ENCODE measurements at regions of chr17 and their contacts with region 1.

Region 1: GRCh38 chr17:3865176-3865575 is 19.1 kb upstream of the NCBP3 start:
- DNase-seq: peak in 2 of 5 donors; percentile 44 to 48
- ATAC-seq: peak in 2 of 4 donors; percentile 62 to 65
- H3K4me3 ChIP-seq: no peak overlapping the region
- H3K27ac ChIP-seq: no peak overlapping the region
- H3K4me1 ChIP-seq: peaks cover 0 to 9% (median 0%) of the 10 kb centered on the region in 12 donors
- H3K27me3 ChIP-seq: no peaks in the 10 kb centered on the region
- CTCF ChIP-seq: no peak
- POLR2A ChIP-seq: no peak

Region 2: GRCh38 chr17:3732210-3732621 is 133.0 kb before region 1 on chr17:
- intact Hi-C with region 1: no loop called
- DNase-seq: peak in 1 of 5 donors; percentile 35
- ATAC-seq: peak in 2 of 4 donors; percentile 29 to 60
- H3K4me3 ChIP-seq: no peak overlapping the region
- H3K27ac ChIP-seq: no peak overlapping the region
- H3K4me1 ChIP-seq: peaks cover 0 to 5% (median 0%) of the 10 kb centered on the region in 12 donors
- H3K27me3 ChIP-seq: peaks cover 0 to 8% (median 0%) of the 10 kb centered on the region in 9 donors
- CTCF ChIP-seq: no peak
- POLR2A ChIP-seq: no peak

Region 3: DNA sequence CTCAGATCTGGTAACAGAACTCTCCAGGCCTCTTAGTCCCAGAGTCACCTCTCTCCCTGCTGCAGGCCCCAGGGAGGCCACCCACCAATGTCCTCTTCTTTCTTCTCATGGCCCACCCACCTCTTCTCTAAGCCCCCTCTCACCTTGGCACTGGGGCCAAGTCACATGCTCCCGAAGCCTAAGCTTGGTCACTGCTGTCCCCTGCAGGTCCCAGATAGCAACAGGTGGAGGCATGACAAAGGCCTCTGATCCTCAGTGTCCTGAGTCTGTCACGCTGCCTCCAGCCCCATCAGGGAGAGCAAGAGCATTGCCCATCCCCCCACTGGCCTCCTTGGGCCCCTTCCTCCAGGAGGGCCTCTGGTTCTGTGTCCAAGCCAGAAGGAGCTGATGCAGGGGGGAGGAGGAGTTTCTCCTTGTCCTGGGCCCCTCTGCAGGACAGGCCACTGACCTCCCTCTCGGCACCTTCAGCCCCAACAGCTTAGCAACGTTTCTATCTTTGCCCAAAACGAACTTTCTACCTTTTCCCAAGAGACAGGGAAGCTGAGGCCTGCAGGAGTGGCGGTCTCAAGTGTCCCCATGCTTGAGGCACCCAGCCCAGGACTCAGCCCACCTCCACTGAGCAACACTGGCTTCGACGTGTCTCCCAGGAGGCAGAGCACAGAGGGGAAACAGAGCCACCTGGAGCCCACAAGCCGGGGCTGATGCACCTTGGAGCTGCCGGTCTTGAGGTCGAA is 42.5 kb after region 1 on chr17:
- intact Hi-C with region 1: loop called in 9 of 10 experiments (anchors 2 to 5 kb)
- DNase-seq: no peak
- ATAC-seq: peak in 1 of 4 donors; percentile 36
- H3K4me3 ChIP-seq: no peak overlapping the region
- H3K27ac ChIP-seq: no peak overlapping the region
- H3K4me1 ChIP-seq: peaks cover 0 to 13% (median 3%) of the 10 kb centered on the region in 12 donors
- H3K27me3 ChIP-seq: no peaks in the 10 kb centered on the region
- CTCF ChIP-seq: peak; percentile 4 to 42 (median 28)
- POLR2A ChIP-seq: no peak

Region 4: GRCh38 chr17:3913531-3914311 is 48.5 kb after region 1 on chr17:
- intact Hi-C with region 1: loop called in 8 of 10 experiments (anchors 2 to 5 kb)
- DNase-seq: peak; percentile 77 to 88 (median 83)
- ATAC-seq: peak; percentile 56 to 79 (median 70)
- H3K4me3 ChIP-seq: peak overlapping the region in 2 of 12 donors; percentile 12 to 53
- H3K27ac ChIP-seq: peak overlapping the region in 3 of 12 donors; percentile 9 to 79 (median 41)
- H3K4me1 ChIP-seq: peaks cover 3 to 52% (median 31%) of the 10 kb centered on the region in 12 donors
- H3K27me3 ChIP-seq: no peaks in the 10 kb centered on the region
- CTCF ChIP-seq: peak; percentile 92 to 99 (median 96)
- POLR2A ChIP-seq: no peak